ENCODE measurements at regions of chr18 and their contacts with region 1.

Region 1: DNA sequence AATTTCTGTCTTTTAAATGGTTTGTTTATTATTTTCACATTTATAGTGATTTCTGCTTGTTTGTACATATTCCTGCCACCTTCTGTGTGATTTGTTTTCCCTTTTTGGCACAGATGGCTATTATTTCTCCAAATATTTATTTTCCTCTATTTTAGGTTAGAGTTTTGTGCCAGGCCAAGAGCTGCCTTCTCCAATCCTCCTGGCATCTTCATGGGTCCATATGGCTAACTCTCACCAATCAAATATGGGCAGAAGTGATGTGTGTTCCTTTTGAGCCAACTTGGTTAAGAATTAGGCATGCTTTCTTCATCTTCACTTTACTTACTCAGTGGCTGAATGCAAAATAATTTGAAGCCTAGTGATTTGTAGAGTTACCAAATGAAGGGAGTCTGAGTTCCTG is 697.1 kb upstream of the CELF4 start:
- DNase-seq: no peak
- ATAC-seq: no peak

Region 2: GRCh38 chr18:38313831-38314230 is 51.2 kb after region 1 on chr18:
- intact Hi-C with region 1: loop called in 1 of 2 experiments (anchors 5 kb)
- DNase-seq: no peak
- ATAC-seq: no peak

Measured in left colon (tissue), 2 donors.